HEK293T (cell line): ENCODE measurements at regions of chr3 and their contacts with region 1.

Region 1: DNA sequence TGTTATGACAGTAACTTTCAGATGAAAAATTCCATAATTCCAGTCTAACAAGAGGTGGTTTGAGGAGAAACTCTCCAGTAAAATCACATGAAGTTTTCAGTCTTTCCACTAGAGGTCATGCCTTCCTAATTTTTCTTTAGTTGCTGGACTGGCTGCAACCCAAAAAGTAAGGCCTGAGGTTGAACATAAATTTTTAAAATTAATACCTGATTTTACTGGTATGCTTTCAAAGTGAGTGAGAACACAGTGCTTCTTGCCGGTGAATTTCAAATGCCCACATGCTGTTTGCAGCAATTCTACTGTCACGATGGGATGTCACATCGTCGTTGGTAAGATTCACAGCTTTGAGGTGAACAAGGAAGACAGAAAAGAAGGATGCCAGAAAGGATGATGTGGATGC is 89.0 kb upstream of the FGF12 start:
- DNase-seq: peak; percentile 14

Region 2: DNA sequence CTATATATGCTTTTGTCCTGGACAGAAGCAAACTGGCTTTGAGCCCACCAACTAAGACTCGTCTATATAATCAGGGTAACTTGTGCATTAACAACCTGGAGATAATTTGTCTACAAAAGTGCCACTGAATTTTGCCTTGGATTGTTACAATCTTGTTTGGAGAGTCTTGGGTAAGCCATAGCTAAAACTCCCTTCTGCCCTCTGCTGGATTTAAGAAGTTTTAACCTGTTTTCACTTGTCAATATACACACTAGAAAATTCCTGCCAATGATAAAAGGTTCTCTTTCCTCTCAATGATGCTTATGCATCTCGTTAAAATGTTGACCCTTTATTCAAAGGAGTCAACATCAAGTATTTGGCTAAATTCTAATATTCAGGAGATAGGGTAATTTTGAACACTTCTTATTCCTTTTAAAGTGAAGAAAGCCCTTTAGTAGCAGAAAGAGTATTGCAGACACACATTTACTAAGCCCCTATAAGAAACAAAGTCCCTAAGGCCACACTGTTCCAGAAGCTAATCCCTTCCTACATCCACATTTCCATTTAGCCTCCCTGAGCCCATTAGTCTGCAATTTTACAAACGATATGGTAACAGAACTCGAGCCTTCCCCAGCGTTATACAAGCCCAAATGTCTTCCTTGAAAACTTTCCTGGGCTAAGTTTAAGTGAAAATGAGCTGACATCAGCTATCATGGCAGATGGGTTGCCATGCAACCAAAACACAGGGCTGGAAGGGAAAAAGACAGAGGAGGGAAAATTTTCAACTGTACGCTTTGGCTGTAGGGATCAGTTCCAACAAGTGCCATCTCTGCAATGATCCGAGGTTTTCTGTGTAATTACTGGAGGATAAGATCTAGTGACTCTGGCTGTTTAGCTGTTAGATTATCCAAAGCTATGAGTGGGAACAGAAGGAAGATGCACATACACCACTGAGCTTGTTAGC is 13.1 kb before region 1 on chr3:
- CTCF ChIA-PET with region 1: no interaction called
- POLR2A ChIA-PET with region 1: no interaction called
- DNase-seq: peak; percentile 23

Region 3: GRCh38 chr3:192831111-192831644 is 14.8 kb after region 1 on chr3:
- CTCF ChIA-PET with region 1: no interaction called
- POLR2A ChIA-PET with region 1: no interaction called
- DNase-seq: no peak

Region 4: DNA sequence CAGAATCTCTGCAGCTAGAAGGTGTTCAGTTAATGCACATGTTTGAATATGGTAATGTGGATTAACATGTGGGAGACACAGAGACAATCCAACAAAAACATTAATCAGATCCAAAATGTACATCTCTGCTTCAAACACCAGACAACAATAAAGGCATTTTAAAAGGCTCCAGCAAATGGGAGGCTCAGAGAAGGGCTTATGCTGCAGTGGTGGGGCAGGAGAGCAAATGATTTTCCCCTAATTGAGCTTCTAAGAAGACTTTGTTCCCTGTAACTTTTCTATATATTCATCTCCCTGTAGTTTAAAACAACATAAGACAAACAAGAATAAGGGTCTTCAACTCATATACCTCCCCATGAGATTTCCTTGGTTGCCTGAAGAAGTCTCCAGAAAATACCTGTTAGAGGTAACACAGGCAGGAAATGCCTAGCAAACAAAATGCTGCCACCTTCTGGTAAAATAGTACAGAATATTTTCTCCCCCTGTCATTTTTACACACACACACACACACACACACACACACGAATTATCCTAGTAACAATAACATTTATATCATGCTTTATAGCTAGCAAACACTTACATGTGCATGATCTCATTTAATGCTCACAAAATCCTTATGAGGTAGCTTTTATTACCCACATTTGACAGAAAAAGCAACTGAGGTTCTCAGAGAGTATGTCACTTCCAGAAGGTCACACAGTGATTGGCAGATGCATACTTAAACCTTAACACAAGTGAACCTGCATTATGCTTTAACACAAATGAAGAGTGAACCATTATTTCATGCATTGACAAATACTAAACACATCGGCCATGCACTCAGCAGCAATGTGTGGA is 224.7 kb after region 1 on chr3:
- CTCF ChIA-PET with region 1: interaction called, 22 read pairs
- POLR2A ChIA-PET with region 1: no interaction called
- DNase-seq: no peak

Region 5: DNA sequence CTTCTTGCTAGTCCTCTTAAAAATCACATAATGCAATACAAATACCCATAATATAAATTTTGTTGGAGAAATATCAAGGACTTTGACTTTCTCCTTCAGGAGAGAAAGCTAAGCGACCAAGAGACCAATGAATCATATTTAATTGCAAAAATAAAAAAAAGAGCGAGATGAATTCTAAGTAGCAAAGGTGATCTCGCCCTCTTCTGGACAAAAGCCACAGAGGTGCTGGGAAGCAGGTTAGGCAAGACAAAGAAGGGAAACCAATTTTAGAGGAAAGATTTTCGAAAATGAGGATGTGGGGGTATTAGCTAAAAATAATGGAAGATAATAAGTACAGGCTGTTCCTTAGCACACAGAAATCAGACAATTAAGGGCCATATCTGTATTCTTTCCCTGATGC is 313.2 kb after region 1 on chr3:
- CTCF ChIA-PET with region 1: interaction called, 10 read pairs
- POLR2A ChIA-PET with region 1: no interaction called
- DNase-seq: no peak